ENCODE measurements at regions of chr12 and their contacts with region 1.

Region 1: GRCh38 chr12:53344824-53345485 is 8.8 kb upstream of the SP7 start:
- DNase-seq: peak; percentile 58
- H3K4me3 ChIP-seq: peak overlapping the region; percentile 59 to 65 (median 62)
- H3K27ac ChIP-seq: no peak overlapping the region
- H3K4me1 ChIP-seq: peaks cover 6% of the 10 kb centered on the region
- H3K27me3 ChIP-seq: no peaks in the 10 kb centered on the region
- CTCF ChIP-seq: peak; percentile 40 to 84

Region 2: DNA sequence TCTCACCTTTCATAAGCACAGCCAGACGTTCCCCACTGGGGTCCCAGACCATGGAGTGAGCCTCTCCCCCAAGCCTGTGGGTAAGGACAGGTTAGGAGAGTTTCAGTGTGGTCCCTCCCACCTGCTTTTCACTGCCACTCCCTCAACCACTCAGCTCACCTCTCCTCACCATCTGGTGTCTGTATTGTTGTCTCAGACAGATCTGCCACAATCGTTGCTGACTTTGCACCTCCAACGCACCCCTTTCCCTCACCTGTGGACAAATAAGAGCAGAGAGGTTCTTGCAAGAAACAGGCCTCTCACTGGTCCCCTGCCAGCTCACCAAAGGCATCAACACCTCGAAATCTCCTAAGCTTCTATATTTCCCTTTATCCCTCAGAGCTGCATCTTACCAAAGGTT is 36.7 kb before region 1 on chr12:
- CTCF ChIA-PET with region 1: no interaction called
- dilution Hi-C with region 1: loop called (anchors 5 kb)
- in situ Hi-C with region 1: no loop called
- intact Hi-C with region 1: no loop called
- DNase-seq: no peak
- H3K4me3 ChIP-seq: no peak overlapping the region
- H3K27ac ChIP-seq: no peak overlapping the region
- H3K4me1 ChIP-seq: no peaks in the 10 kb centered on the region
- H3K27me3 ChIP-seq: no peaks in the 10 kb centered on the region
- CTCF ChIP-seq: no peak

Region 3: GRCh38 chr12:53414756-53415417 is 69.9 kb after region 1 on chr12:
- CTCF ChIA-PET with region 1: interaction called, 20 read pairs
- dilution Hi-C with region 1: loop called (anchors 5 kb)
- in situ Hi-C with region 1: loop called (anchors 5 to 10 kb)
- intact Hi-C with region 1: no loop called
- DNase-seq: no peak
- H3K4me3 ChIP-seq: no peak overlapping the region
- H3K27ac ChIP-seq: no peak overlapping the region
- H3K4me1 ChIP-seq: no peaks in the 10 kb centered on the region
- H3K27me3 ChIP-seq: no peaks in the 10 kb centered on the region
- CTCF ChIP-seq: no peak